Mammary epithelial cell (primary cell): ENCODE measurements at regions of chr22 and their contacts with region 1.

Region 1: DNA sequence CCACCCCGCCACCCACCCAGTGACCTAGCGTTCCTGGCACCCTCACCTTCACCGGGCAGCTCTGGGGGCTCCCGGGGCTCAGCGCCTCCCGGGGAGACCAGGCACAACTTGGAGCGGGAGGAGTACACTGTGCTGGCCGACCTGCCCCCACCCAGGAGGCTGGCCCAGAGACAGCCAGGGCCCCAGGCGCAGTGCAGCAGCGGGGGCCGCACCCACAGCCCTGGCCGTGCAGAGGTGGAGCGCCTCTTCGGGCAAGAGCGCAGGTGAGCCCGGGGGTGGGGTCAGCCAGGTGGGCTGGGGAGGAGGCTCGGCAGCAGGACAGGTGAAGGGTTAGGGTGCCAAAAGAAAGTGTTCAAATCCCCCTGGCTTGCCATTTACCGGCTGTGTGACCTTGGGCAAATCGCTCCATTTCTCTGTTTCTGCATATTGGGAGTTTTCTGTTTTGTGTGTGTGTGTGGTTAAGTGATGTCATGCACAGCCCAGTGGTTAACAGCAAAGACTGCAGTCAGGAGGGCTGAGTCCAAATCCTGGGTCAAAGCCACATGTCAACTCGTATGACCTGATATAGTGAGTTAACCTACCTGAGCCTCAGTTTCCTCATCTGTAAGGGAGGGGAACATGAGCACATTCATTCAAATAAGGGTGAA is 29.5 kb downstream of the TRIOBP start:
- DNase-seq: peak; percentile 19
- H3K4me3 ChIP-seq: no peak overlapping the region
- H3K27ac ChIP-seq: no peak overlapping the region
- H3K4me1 ChIP-seq: no peaks in the 10 kb centered on the region
- H3K27me3 ChIP-seq: no peaks in the 10 kb centered on the region
- CTCF ChIP-seq: peak in 1 of 2 donors; percentile 12

Region 2: DNA sequence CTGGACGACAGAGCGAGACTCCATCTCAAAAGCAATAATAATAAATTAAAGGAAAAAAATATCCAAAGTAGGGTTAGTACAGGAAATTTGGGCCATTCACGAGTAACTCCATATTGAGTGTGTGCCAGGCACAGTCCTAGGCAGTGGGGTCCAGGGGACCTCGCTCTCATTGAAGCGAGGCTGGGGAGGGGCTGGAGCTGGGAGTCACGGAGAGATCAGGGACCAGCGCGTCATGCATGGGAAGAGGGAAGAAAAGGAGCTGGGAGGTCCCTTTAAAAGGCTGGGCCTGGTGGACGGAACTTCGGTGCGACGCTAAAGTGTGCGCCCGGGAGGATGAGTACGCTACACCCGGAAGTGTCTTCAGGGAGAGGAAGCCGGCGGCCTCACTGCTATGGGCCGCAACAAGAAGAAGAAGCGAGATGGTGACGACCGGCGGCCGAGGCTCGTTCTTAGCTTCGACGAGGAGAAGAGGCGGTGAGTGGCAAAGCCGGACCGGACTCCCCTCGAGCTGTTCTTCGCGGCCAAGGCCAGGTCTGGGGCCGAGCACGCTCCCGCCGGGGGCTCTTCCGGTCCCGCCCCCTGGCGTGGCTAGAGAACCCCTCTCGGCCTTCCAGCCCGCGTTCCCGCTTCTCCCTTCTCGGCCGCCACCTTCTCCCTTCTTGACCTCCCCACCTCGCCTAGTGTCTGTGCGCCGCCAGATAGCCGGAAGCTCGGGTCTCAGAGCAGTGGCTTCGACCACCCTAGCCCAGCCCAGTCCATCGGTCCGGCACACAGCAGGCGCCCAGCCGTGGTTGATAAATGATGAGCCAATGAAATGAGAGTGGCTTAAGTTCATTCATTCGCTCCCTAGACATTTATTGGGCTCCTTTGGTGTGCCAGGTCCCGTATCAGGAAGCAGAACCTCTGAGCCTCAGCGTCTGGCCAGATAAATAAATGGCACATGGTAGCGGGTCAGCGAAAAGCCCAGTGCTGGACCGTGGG is 40.1 kb before region 1 on chr22 and contains the start of gene NOL12:
- CTCF ChIA-PET with region 1: no interaction called
- dilution Hi-C with region 1: no loop called
- in situ Hi-C with region 1: no loop called
- intact Hi-C with region 1: loop called (anchors 5 kb)
- DNase-seq: peak; percentile 86
- H3K4me3 ChIP-seq: peak within 1 kb of the TSS; percentile 88 to 97 (median 91)
- H3K27ac ChIP-seq: peak within 1 kb of the TSS; percentile 77
- H3K4me1 ChIP-seq: peaks cover 44% of the 10 kb centered on the region
- H3K27me3 ChIP-seq: no peaks in the 10 kb centered on the region
- CTCF ChIP-seq: no peak
- total RNA-seq, gene NOL12: 8.0 to 32.4 TPM